A549 (cell line): ENCODE measurements at regions of chr6 and their contacts with region 1.

Region 1: DNA sequence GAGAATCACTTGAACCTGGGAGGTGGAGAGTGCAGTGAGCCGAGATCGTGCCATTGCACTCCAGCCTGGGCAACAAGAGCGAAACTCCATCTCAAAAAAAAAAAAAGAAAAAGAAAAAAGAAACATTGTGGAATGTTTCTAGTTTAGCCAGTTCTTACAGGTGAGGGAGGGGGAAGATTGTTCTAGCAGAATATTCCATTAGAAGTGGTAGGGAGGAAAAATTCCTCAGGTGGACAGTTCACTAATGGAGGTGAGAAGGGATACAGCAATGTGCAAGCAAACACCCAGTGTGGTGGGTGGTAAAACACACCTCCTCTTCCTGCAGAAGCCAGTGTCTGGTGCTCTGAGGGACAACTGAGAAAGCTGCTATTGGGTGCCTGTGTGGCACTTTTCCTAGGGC is 6.6 kb downstream of the ABHD16A start:
- DNase-seq: no peak
- ATAC-seq: no peak
- H3K4me3 ChIP-seq: no peak overlapping the region
- H3K27ac ChIP-seq: no peak overlapping the region
- H3K4me1 ChIP-seq: peaks cover 8% of the 10 kb centered on the region; the same call in 2 of the 3 replicates
- CTCF ChIP-seq: no peak
- EP300 ChIP-seq: no peak
- POLR2A ChIP-seq: no peak
- RAD21 ChIP-seq: no peak

Region 2: GRCh38 chr6:31680840-31681671 is 15.5 kb before region 1 on chr6 and contains the start of gene LY6G5C:
- CTCF ChIA-PET with region 1: interaction called, 13 read pairs
- POLR2A ChIA-PET with region 1: no interaction called
- DNase-seq: peak; percentile 67 to 83
- ATAC-seq: peak; percentile 82 to 90
- H3K4me3 ChIP-seq: peak within 1 kb of the TSS; percentile 22; the same call in 2 of the 3 replicates
- H3K27ac ChIP-seq: peak within 1 kb of the TSS in 1 of 2 experiments; percentile 78; a peak in 3 of 6 replicates
- H3K4me1 ChIP-seq: peaks cover 8% of the 10 kb centered on the region; the same call in 1 of the 3 replicates
- CTCF ChIP-seq: peak; percentile 70
- EP300 ChIP-seq: no peak
- POLR2A ChIP-seq: no peak
- RAD21 ChIP-seq: peak; percentile 80 to 90
- polyA plus RNA-seq, gene LY6G5C: 1.2 and 1.6 TPM in 2 replicates